Caco-2 (cell line): ENCODE measurements at regions of chr11 and their contacts with region 1.

Region 1: DNA sequence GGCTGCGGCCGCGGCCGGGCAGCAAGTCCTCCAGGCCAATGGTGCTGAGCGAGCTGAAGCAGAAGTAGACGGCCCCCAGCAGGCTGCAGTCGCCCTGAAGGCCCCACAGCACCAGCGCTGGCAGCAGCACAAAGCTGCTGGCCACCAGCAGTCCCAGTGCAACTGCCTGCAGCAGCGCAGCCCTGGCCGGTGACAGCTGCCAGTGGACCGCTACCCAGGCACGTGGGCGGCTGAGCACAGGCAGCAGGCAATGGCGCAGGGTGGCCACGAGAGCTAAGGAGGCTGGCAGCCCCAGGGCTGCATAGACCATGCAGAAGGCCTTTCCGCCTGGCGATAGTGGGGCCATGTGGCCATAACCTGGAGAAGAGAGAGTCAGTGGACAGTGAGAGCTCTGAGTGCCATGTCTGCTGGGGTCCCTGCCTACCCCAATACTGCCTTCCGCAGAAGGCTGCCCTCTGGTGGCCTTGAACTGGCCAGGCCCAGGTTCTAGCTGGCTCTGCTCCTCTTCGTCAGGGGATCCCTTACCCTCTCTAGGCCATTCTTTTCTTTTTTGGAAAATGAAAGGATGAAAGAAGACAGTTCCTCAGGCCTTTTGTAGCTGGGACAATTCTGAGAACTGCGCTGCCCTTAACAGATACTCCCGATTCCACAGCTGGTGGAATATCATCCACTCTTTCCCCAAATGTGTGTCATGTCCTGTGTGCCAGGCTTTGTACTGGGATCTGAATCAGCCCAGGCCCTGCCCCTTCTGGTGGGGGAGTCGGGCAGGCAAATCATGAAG is 1.9 kb downstream of the KCNK7 start:
- DNase-seq: peak in 1 of 2 experiments; percentile 54
- H3K4me3 ChIP-seq: no peak overlapping the region
- H3K4me3 Mint-ChIP-seq: peak overlapping the region; percentile 45
- H3K27ac Mint-ChIP-seq: no peak overlapping the region
- H3K4me1 ChIP-seq: peaks cover 5% of the 10 kb centered on the region; the same call in 1 of the 2 replicates
- H3K4me1 Mint-ChIP-seq: no peaks in the 10 kb centered on the region
- H3K27me3 ChIP-seq: no peaks in the 10 kb centered on the region
- H3K27me3 Mint-ChIP-seq: no peaks in the 10 kb centered on the region
- CTCF ChIP-seq: peak; percentile 64 to 68

Region 2: GRCh38 chr11:65606876-65607613 is 13.3 kb after region 1 on chr11:
- CTCF ChIA-PET with region 1: interaction called, 22 read pairs
- POLR2A ChIA-PET with region 1: interaction called, 6 read pairs
- intact Hi-C with region 1: no loop called
- DNase-seq: peak; percentile 98 to 99
- H3K4me3 ChIP-seq: peak overlapping the region; percentile 47
- H3K4me3 Mint-ChIP-seq: peak overlapping the region; percentile 67
- H3K27ac Mint-ChIP-seq: peak overlapping the region; percentile 43
- H3K4me1 ChIP-seq: peaks cover 15% of the 10 kb centered on the region
- H3K4me1 Mint-ChIP-seq: peaks cover 16% of the 10 kb centered on the region
- H3K27me3 ChIP-seq: no peaks in the 10 kb centered on the region
- H3K27me3 Mint-ChIP-seq: no peaks in the 10 kb centered on the region
- CTCF ChIP-seq: no peak

Region 3: GRCh38 chr11:66359662-66360087 is 766.0 kb after region 1 on chr11:
- CTCF ChIA-PET with region 1: no interaction called
- POLR2A ChIA-PET with region 1: no interaction called
- intact Hi-C with region 1: no loop called
- DNase-seq: peak in 1 of 2 experiments; percentile 50
- H3K4me3 ChIP-seq: no peak overlapping the region
- H3K4me3 Mint-ChIP-seq: no peak overlapping the region
- H3K27ac Mint-ChIP-seq: no peak overlapping the region
- H3K4me1 ChIP-seq: peaks cover 9% of the 10 kb centered on the region
- H3K4me1 Mint-ChIP-seq: peaks cover 12% of the 10 kb centered on the region
- H3K27me3 ChIP-seq: no peaks in the 10 kb centered on the region
- H3K27me3 Mint-ChIP-seq: no peaks in the 10 kb centered on the region
- CTCF ChIP-seq: no peak